ENCODE measurements at regions of chr10 and their contacts with region 1.

Region 1: DNA sequence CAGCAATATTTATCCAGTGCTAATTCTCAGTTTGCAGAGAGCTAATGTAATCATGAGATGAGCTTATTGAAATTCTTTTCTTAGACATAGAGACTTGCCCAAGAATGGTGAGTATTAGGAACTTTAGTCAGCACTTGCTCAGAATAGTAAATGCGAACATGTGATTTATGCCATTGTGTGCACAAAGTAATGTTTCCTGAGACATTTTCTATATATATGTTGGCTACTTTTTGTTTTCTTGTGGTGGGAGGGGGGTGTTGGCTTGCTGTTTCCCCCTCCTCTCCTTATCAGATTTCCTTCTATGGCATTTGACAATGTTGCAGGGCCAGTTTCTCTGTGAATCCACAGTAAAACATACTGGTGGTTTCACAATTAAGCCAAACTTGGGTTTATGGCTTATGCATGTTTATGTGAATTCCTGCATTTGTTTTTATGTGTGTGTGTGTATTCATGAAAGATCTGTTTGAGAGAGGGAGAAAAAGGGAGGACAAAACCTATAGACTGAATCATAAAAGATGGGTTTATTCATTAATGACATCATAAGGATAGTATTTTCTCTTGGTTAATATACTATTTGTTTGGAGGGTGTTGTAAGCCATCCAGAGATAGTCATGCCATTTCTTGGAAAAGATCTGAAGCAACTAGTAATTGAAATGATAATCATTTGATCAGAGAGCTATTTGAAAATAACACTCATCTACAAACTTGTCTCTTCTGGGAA is 36.3 kb downstream of the ARID5B start:
- DNase-seq: no peak
- H3K4me3 Mint-ChIP-seq: peak overlapping the region; percentile 5
- H3K27ac Mint-ChIP-seq: peak overlapping the region; percentile 78
- H3K4me1 Mint-ChIP-seq: peaks cover 75% of the 10 kb centered on the region
- H3K27me3 Mint-ChIP-seq: no peaks in the 10 kb centered on the region

Region 2: DNA sequence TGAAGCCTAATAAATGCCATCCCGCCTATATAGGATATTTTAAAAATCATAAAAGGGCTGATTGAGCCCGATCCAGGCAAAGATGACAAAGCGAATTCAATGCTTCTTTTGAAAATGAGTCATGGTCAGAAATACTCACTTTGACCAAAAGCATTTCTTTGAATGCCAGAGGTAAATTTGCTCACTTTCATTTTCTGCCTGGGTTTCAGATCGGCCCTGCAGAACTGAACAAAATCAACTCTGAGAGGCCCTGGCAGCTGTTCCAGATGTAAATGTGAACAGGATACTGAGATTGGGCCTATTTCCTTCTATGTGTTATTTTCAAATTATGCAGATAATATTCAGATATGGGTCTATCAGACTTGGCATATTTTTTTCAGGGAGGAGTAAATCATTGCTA is 151.1 kb before region 1 on chr10:
- intact Hi-C with region 1: loop called (anchors 2 kb)
- DNase-seq: no peak
- H3K4me3 Mint-ChIP-seq: no peak overlapping the region
- H3K27ac Mint-ChIP-seq: no peak overlapping the region
- H3K4me1 Mint-ChIP-seq: peaks cover 51% of the 10 kb centered on the region
- H3K27me3 Mint-ChIP-seq: no peaks in the 10 kb centered on the region

Region 3: GRCh38 chr10:61961278-61961677 is 23.5 kb after region 1 on chr10:
- intact Hi-C with region 1: no loop called
- DNase-seq: peak; percentile 24
- H3K4me3 Mint-ChIP-seq: peak overlapping the region; percentile 21
- H3K27ac Mint-ChIP-seq: peak overlapping the region; percentile 71
- H3K4me1 Mint-ChIP-seq: peaks cover 86% of the 10 kb centered on the region
- H3K27me3 Mint-ChIP-seq: no peaks in the 10 kb centered on the region

Region 4: GRCh38 chr10:62025901-62026879 is 88.4 kb after region 1 on chr10:
- intact Hi-C with region 1: no loop called
- DNase-seq: no peak
- H3K4me3 Mint-ChIP-seq: no peak overlapping the region
- H3K27ac Mint-ChIP-seq: no peak overlapping the region
- H3K4me1 Mint-ChIP-seq: peaks cover 79% of the 10 kb centered on the region
- H3K27me3 Mint-ChIP-seq: no peaks in the 10 kb centered on the region

Measured in activated T-helper 1 cell treated with anti-CD3 and anti-CD28 coated beads, Interleukin-12 subunit alpha, Interleukin-12 subunit beta, Interleukin-2, Interleukin-4 antibody, amounts not matched to agents 30 ng/mL and 10 ng/mL and 1 ng/mL, durations not matched to agents 14 hours and 24 hours and 36 hours (primary cell).